ENCODE measurements at regions of chr15 and their contacts with region 1.

Region 1: GRCh38 chr15:73426323-73426994 is 16.5 kb upstream of the REC114 start:
- DNase-seq: no peak
- ATAC-seq: no peak
- H3K4me3 ChIP-seq: no peak overlapping the region
- H3K27ac ChIP-seq: no peak overlapping the region
- H3K4me1 ChIP-seq: no peaks in the 10 kb centered on the region
- H3K27me3 ChIP-seq: peaks cover 25% of the 10 kb centered on the region
- CTCF ChIP-seq: no peak
- POLR2A ChIP-seq: no peak
- RAD21 ChIP-seq: no peak

Region 2: GRCh38 chr15:73437543-73438109 is 11.2 kb after region 1 on chr15:
- CTCF ChIA-PET with region 1: no interaction called
- POLR2A ChIA-PET with region 1: interaction called, 16 read pairs
- dilution Hi-C with region 1: no loop called
- in situ Hi-C with region 1: no loop called
- intact Hi-C with region 1: no loop called
- DNase-seq: no peak
- ATAC-seq: no peak
- H3K4me3 ChIP-seq: no peak overlapping the region
- H3K27ac ChIP-seq: no peak overlapping the region
- H3K4me1 ChIP-seq: no peaks in the 10 kb centered on the region
- H3K27me3 ChIP-seq: peaks cover 22% of the 10 kb centered on the region
- CTCF ChIP-seq: no peak
- POLR2A ChIP-seq: no peak
- RAD21 ChIP-seq: no peak

Region 3: GRCh38 chr15:73482166-73482565 is 55.7 kb after region 1 on chr15:
- CTCF ChIA-PET with region 1: no interaction called
- POLR2A ChIA-PET with region 1: no interaction called
- dilution Hi-C with region 1: no loop called
- in situ Hi-C with region 1: loop called (anchors 10 kb)
- intact Hi-C with region 1: no loop called
- DNase-seq: no peak
- ATAC-seq: no peak
- H3K4me3 ChIP-seq: no peak overlapping the region
- H3K27ac ChIP-seq: no peak overlapping the region
- H3K4me1 ChIP-seq: peaks cover 8% of the 10 kb centered on the region; the same call in 1 of the 2 replicates
- H3K27me3 ChIP-seq: peaks cover 11% of the 10 kb centered on the region
- CTCF ChIP-seq: no peak
- POLR2A ChIP-seq: no peak
- RAD21 ChIP-seq: no peak

Measured in IMR-90 (cell line).